Activated CD4-positive, alpha-beta memory T cell treated with anti-CD3 and anti-CD28 coated beads for 36 hours (primary cell): ENCODE measurements at regions of chr12 and their contacts with region 1.

Region 1: DNA sequence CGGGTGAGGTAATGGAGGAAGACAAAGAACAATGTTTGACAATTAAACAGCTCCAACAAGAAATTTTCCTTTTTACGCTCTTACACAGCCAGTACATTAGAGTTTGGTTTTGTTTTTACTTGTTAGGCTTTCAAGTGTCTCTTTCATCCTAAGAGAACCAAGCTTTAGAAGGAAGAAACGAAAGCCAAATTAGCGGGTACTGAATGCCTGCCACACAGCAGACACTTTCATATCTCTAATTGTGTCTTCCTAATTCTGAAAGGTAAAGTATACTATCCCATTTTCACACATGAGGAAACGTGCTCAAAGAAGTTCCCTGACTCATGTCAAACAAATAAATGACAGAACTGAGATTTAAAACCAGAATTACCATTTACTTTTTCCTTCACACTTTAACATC is 65.0 kb downstream of the CDK17 start:
- DNase-seq: no peak
- H3K4me3 Mint-ChIP-seq: no peak overlapping the region
- H3K27ac Mint-ChIP-seq: peak overlapping the region; percentile 54
- H3K4me1 Mint-ChIP-seq: peaks cover 41% of the 10 kb centered on the region
- H3K27me3 Mint-ChIP-seq: no peaks in the 10 kb centered on the region

Region 2: GRCh38 chr12:96350982-96351381 is 15.7 kb after region 1 on chr12:
- CTCF ChIA-PET with region 1: no interaction called
- POLR2A ChIA-PET with region 1: no interaction called
- intact Hi-C with region 1: loop called (anchors 2 kb)
- DNase-seq: no peak
- H3K4me3 Mint-ChIP-seq: no peak overlapping the region
- H3K27ac Mint-ChIP-seq: no peak overlapping the region
- H3K4me1 Mint-ChIP-seq: peaks cover 71% of the 10 kb centered on the region
- H3K27me3 Mint-ChIP-seq: no peaks in the 10 kb centered on the region

Region 3: GRCh38 chr12:96510306-96510764 is 175.1 kb after region 1 on chr12:
- CTCF ChIA-PET with region 1: no interaction called
- POLR2A ChIA-PET with region 1: no interaction called
- intact Hi-C with region 1: no loop called
- DNase-seq: no peak
- H3K4me3 Mint-ChIP-seq: no peak overlapping the region
- H3K27ac Mint-ChIP-seq: no peak overlapping the region
- H3K4me1 Mint-ChIP-seq: peaks cover 4% of the 10 kb centered on the region
- H3K27me3 Mint-ChIP-seq: no peaks in the 10 kb centered on the region